Natural killer cell (primary cell): ENCODE measurements at regions of chr11 and their contacts with region 1.

Region 1: DNA sequence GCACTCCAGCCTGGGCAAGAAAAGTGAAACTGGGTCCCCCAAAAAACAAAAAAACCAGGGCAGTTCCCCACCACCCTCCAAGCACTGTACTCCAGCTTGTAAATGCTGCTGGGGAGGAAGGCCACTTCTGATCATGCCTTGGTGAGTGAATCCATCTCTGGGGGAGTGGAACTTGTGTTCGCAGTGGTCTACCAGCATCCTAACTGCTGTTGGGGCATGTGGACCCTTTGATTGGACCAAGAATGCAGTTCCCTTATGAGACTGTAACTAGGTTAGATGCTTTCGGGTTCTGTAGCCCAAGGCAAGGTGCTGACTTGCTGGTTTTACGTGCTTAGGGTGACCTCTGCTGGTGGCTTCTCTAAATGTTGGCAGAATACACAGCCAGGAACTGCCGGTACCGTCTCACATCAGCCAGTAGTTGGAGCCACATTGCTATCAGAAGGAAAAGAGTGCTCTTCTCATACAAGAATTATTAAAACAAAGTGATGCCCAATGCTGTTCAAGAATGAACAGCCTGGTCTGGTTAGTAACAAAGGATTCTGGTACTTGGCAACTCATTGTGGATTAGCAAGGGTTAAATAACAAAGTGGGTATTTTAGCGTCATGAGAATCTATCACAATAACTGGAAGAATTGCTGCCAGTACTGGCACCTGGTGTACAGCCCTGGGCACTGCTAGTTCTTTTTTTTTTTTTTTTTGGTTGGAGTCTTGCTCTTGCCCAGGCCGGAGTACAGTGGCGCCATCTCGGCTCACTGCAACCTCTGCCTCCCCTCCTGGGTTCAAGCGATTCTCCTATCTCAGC is 13.0 kb downstream of the EIF1AD start:
- DNase-seq: peak; percentile 85 to 97
- ATAC-seq: peak; percentile 96 to 100 (median 98)
- H3K4me3 ChIP-seq: no peak overlapping the region
- H3K4me3 Mint-ChIP-seq: no peak overlapping the region
- H3K27ac ChIP-seq: peak overlapping the region; percentile 3
- H3K27ac Mint-ChIP-seq: peak overlapping the region; percentile 83
- H3K4me1 ChIP-seq: no peaks in the 10 kb centered on the region
- H3K4me1 Mint-ChIP-seq: peaks cover 6 to 7% of the 10 kb centered on the region in 2 donors
- H3K27me3 ChIP-seq: no peaks in the 10 kb centered on the region
- H3K27me3 Mint-ChIP-seq: no peaks in the 10 kb centered on the region
- CTCF ChIP-seq: peak; percentile 99

Region 2: GRCh38 chr11:65540297-65541092 is 448.5 kb before region 1 on chr11:
- intact Hi-C with region 1: loop called (anchors 10 kb)
- DNase-seq: peak; percentile 88 to 93
- ATAC-seq: peak; percentile 88 to 96 (median 90)
- H3K4me3 ChIP-seq: peak overlapping the region; percentile 71
- H3K4me3 Mint-ChIP-seq: peak overlapping the region; percentile 88
- H3K27ac ChIP-seq: peak overlapping the region; percentile 70
- H3K27ac Mint-ChIP-seq: peak overlapping the region; percentile 39 to 76
- H3K4me1 ChIP-seq: peaks cover 17% of the 10 kb centered on the region
- H3K4me1 Mint-ChIP-seq: peaks cover 7 to 40% of the 10 kb centered on the region in 2 donors
- H3K27me3 ChIP-seq: no peaks in the 10 kb centered on the region
- H3K27me3 Mint-ChIP-seq: no peaks in the 10 kb centered on the region
- CTCF ChIP-seq: peak; percentile 52

Region 3: DNA sequence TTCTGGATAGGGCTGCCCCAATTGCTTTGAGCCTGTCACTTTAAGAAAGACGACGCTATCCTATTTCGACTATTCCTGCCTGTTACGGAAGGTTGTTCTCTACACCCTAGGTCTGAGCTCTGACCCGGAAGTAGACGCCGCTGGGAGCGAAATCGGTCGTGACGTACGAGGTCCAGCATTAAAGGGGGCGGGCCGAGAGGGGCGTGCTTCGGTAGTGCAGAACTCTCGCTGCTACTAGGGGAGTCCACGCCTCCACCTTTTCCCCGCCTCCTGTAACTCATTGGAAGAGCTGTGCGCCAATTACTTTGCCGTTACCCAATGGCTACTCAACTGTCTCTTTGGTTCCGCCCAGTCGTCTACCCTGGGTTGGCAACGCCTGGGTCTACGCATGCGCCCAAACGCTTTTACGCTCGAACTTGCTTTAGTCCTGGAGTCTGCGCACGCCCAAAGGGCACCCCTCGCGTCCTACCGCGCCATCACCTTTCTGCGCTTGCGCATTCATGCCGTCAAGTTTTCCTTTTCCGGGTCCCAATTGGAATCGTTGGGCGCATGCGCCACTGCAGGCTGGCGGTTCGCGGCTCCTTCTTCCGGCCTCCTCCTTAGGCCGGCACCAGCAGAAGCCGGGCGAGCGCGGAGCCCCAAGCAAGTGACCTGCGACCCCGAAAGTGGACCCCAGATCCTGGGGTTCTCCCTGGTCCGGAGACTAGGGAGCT is 373.6 kb before region 1 on chr11 and contains the start of gene PCNX3:
- intact Hi-C with region 1: no loop called
- DNase-seq: peak; percentile 99 to 100
- ATAC-seq: peak; percentile 84 to 95 (median 85)
- H3K4me3 ChIP-seq: peak within 1 kb of the TSS; percentile 86
- H3K4me3 Mint-ChIP-seq: peak within 1 kb of the TSS; percentile 98
- H3K27ac ChIP-seq: peak within 1 kb of the TSS; percentile 97
- H3K27ac Mint-ChIP-seq: peak within 1 kb of the TSS; percentile 96 to 97
- H3K4me1 ChIP-seq: peaks cover 58% of the 10 kb centered on the region
- H3K4me1 Mint-ChIP-seq: peaks cover 32 to 52% of the 10 kb centered on the region in 2 donors
- H3K27me3 ChIP-seq: no peaks in the 10 kb centered on the region
- H3K27me3 Mint-ChIP-seq: no peaks in the 10 kb centered on the region
- CTCF ChIP-seq: no peak
- total RNA-seq, gene PCNX3: 101 to 105 (median 102) TPM

Region 4: DNA sequence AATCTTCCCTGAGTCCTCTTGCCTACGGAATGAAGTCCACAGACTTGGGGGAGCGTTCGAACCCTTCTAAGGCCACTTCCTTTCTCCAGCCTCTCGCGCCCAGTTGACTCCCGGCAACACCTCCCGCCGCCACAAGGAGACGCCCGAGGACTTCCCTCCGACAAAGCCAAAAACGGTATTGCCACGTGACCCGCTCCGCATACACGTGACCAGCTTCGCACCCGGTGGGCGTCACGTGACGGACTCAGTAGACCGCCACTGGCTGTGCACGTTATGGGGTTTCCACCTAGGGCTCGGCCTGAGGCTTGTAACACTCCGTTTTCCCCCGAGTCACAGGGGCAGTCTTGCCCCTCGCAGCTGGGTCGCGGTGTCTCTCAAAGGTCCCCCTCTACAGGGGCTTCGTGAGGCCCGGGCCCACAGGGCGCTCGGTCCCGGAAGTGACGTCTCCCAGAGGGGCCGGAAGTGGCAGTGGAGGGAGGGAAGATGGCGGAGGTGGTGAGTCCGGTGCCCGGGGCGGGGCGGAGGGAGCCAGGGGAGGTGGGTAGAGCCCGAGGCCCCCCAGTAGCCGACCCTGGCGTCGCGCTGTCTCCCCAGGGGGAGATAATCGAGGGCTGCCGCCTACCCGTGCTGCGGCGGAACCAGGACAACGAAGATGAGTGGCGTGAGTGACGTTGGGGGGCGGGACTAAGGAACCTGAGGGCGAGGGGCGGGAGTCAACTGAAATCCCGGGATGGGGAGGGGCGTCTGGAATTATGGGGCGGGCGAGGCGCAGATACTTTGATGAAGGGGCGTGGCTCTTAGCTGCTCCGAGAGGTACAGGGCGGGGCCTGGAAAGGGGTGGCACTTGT is 277.0 kb before region 1 on chr11 and contains the start of gene KAT5:
- intact Hi-C with region 1: loop called (anchors 1 kb)
- DNase-seq: peak; percentile 99
- ATAC-seq: peak; percentile 84 to 90 (median 85)
- H3K4me3 ChIP-seq: peak within 1 kb of the TSS; percentile 95
- H3K4me3 Mint-ChIP-seq: peak within 1 kb of the TSS; percentile 94
- H3K27ac ChIP-seq: peak within 1 kb of the TSS; percentile 99
- H3K27ac Mint-ChIP-seq: peak within 1 kb of the TSS; percentile 95 to 99
- H3K4me1 ChIP-seq: peaks cover 17% of the 10 kb centered on the region
- H3K4me1 Mint-ChIP-seq: peaks cover 0 to 22% of the 10 kb centered on the region in 2 donors
- H3K27me3 ChIP-seq: no peaks in the 10 kb centered on the region
- H3K27me3 Mint-ChIP-seq: no peaks in the 10 kb centered on the region
- CTCF ChIP-seq: peak; percentile 94
- total RNA-seq, gene KAT5: 140 to 155 (median 146) TPM

Region 5: GRCh38 chr11:65773784-65774411 is 215.1 kb before region 1 on chr11:
- intact Hi-C with region 1: loop called (anchors 1 kb)
- DNase-seq: no peak
- ATAC-seq: no peak
- H3K4me3 ChIP-seq: no peak overlapping the region
- H3K4me3 Mint-ChIP-seq: no peak overlapping the region
- H3K27ac ChIP-seq: no peak overlapping the region
- H3K27ac Mint-ChIP-seq: no peak overlapping the region
- H3K4me1 ChIP-seq: peaks cover 13% of the 10 kb centered on the region
- H3K4me1 Mint-ChIP-seq: peaks cover 6 to 11% of the 10 kb centered on the region in 2 donors
- H3K27me3 ChIP-seq: no peaks in the 10 kb centered on the region
- H3K27me3 Mint-ChIP-seq: no peaks in the 10 kb centered on the region
- CTCF ChIP-seq: no peak

Region 6: GRCh38 chr11:65779851-65780577 is 209.0 kb before region 1 on chr11:
- intact Hi-C with region 1: loop called (anchors 1 kb)
- DNase-seq: peak; percentile 73 to 86
- ATAC-seq: peak; percentile 61 to 89 (median 76)
- H3K4me3 ChIP-seq: peak overlapping the region; percentile 84
- H3K4me3 Mint-ChIP-seq: peak overlapping the region; percentile 86
- H3K27ac ChIP-seq: peak overlapping the region; percentile 50
- H3K27ac Mint-ChIP-seq: peak overlapping the region; percentile 45 to 90
- H3K4me1 ChIP-seq: peaks cover 27% of the 10 kb centered on the region
- H3K4me1 Mint-ChIP-seq: peaks cover 6 to 17% of the 10 kb centered on the region in 2 donors
- H3K27me3 ChIP-seq: no peaks in the 10 kb centered on the region
- H3K27me3 Mint-ChIP-seq: peaks cover under 1 to 7% of the 10 kb centered on the region in 2 donors
- CTCF ChIP-seq: peak; percentile 91

Region 7: DNA sequence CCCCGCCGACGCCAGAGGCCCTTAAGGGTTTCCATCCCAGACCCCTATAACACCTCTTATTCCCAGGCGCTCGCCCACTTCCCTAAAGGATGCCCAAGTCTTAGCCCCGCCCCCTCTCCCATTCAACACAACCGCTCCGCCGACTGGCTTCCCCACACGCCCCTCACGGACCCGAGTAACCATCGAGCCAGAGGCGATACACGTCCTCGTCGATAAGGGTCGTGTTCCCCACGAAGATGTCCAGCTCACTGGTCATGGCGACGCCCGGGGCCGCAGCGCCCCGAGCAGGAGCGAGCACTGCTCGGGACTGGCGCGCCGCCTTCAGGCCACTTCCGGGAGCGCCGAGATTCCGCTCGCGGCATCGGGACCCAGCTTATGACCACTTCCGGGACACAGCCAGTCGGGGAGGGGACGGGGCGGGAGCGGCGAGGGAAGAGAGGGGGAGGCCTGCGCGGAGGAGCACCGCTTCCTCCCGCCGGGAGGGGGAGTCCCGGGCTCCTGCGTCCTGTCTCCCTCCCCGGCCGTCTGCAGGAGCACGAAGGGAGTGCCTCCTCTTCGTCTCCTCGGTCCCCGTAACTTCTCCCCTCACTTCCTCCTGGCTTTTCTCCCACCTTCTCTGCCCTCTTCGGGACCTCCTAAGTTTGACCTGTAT is 100.7 kb before region 1 on chr11 and contains the start of gene FIBP:
- intact Hi-C with region 1: loop called (anchors 1 kb)
- DNase-seq: peak; percentile 88 to 97
- ATAC-seq: peak; percentile 60 to 79 (median 64)
- H3K4me3 ChIP-seq: peak within 1 kb of the TSS; percentile 72
- H3K4me3 Mint-ChIP-seq: peak within 1 kb of the TSS; percentile 88
- H3K27ac ChIP-seq: peak within 1 kb of the TSS; percentile 97
- H3K27ac Mint-ChIP-seq: peak within 1 kb of the TSS; percentile 88 to 96
- H3K4me1 ChIP-seq: peaks cover 72% of the 10 kb centered on the region
- H3K4me1 Mint-ChIP-seq: peaks cover 60 to 68% of the 10 kb centered on the region in 2 donors
- H3K27me3 ChIP-seq: no peaks in the 10 kb centered on the region
- H3K27me3 Mint-ChIP-seq: no peaks in the 10 kb centered on the region
- CTCF ChIP-seq: peak; percentile 90
- total RNA-seq, gene FIBP: 36.5 to 47.9 (median 45.7) TPM

Region 8: GRCh38 chr11:65961232-65961901 is 27.6 kb before region 1 on chr11 and contains the start of gene SART1:
- intact Hi-C with region 1: loop called (anchors 1 kb)
- DNase-seq: peak; percentile 90 to 99
- ATAC-seq: peak; percentile 93 to 97 (median 95)
- H3K4me3 ChIP-seq: peak within 1 kb of the TSS; percentile 75
- H3K4me3 Mint-ChIP-seq: peak within 1 kb of the TSS; percentile 99
- H3K27ac ChIP-seq: peak within 1 kb of the TSS; percentile 93
- H3K27ac Mint-ChIP-seq: peak within 1 kb of the TSS; percentile 96 to 98
- H3K4me1 ChIP-seq: peaks cover 41% of the 10 kb centered on the region
- H3K4me1 Mint-ChIP-seq: peaks cover 24 to 40% of the 10 kb centered on the region in 2 donors
- H3K27me3 ChIP-seq: no peaks in the 10 kb centered on the region
- H3K27me3 Mint-ChIP-seq: no peaks in the 10 kb centered on the region
- CTCF ChIP-seq: no peak
- total RNA-seq, gene SART1: 103 to 123 (median 115) TPM